SK-N-SH (cell line): ENCODE measurements at regions of chr13 and their contacts with region 1.

Region 1: DNA sequence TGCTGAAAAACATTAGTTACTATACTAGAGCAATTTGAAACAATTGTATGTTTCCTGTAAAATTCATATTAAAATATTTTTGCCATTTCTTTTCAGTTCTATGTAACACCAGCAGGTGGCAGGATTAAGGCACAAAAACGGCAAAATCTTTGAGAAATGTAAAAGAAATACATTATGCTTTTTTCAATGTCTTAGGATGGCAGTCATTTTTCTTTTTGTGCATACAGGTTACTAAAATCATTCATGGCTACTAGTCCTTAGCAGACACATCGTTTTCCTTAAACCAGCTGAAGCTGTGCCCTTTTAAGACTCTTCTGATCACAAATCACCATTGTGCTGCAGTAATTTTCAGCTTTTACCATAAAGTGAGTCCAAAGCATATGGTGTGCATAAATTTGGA is 800.7 kb upstream of the SLITRK5 start:
- DNase-seq: peak; percentile 4
- H3K4me3 ChIP-seq: no peak overlapping the region
- H3K27ac ChIP-seq: no peak overlapping the region
- H3K4me1 ChIP-seq: no peaks in the 10 kb centered on the region
- H3K27me3 ChIP-seq: no peaks in the 10 kb centered on the region
- CTCF ChIP-seq: peak; percentile 80
- EP300 ChIP-seq: no peak
- RAD21 ChIP-seq: peak; percentile 67

Region 2: DNA sequence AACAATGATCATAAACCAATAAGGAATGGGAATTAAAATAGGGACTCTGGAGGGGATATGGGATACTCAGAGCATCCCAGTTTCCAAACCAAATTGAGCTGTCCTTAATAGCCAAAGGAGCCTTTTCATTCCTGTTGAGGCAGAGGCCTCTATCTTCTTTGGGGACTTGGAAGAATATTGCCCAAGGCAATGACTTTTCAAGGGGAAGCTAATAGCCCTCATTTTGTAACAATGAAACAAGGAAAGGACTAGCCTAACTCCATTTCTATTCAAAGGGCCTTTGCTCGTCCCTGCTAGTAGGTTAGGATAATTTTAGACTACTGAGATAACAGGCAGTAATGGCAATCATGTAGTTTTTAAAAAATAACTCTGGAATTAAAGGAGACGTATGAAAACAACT is 10.9 kb after region 1 on chr13:
- CTCF ChIA-PET with region 1: interaction called, 11 read pairs
- POLR2A ChIA-PET with region 1: no interaction called
- DNase-seq: no peak
- H3K4me3 ChIP-seq: no peak overlapping the region
- H3K27ac ChIP-seq: no peak overlapping the region
- H3K4me1 ChIP-seq: no peaks in the 10 kb centered on the region
- H3K27me3 ChIP-seq: no peaks in the 10 kb centered on the region
- CTCF ChIP-seq: no peak
- EP300 ChIP-seq: no peak
- RAD21 ChIP-seq: no peak

Region 3: GRCh38 chr13:87274209-87274819 is 403.9 kb after region 1 on chr13:
- CTCF ChIA-PET with region 1: interaction called, 58 read pairs
- POLR2A ChIA-PET with region 1: no interaction called
- DNase-seq: peak; percentile 25
- H3K4me3 ChIP-seq: no peak overlapping the region; a peak in 1 of 4 replicates
- H3K27ac ChIP-seq: no peak overlapping the region
- H3K4me1 ChIP-seq: no peaks in the 10 kb centered on the region
- H3K27me3 ChIP-seq: no peaks in the 10 kb centered on the region
- CTCF ChIP-seq: peak; percentile 88
- EP300 ChIP-seq: no peak
- RAD21 ChIP-seq: peak; percentile 70